HepG2 (cell line): ENCODE measurements at regions of chr15 and their contacts with region 1.

Region 1: GRCh38 chr15:70863450-70864218 is 9.7 kb upstream of the LARP6 start:
- DNase-seq: peak; percentile 82
- ATAC-seq: peak; percentile 78
- H3K4me3 ChIP-seq: no peak overlapping the region
- H3K27ac ChIP-seq: no peak overlapping the region
- H3K4me1 ChIP-seq: peaks cover 29% of the 10 kb centered on the region
- H3K27me3 ChIP-seq: no peaks in the 10 kb centered on the region; a peak in 1 of 5 replicates
- CTCF ChIP-seq: no peak
- EP300 ChIP-seq: no peak
- POLR2A ChIP-seq: no peak
- RAD21 ChIP-seq: no peak

Region 2: DNA sequence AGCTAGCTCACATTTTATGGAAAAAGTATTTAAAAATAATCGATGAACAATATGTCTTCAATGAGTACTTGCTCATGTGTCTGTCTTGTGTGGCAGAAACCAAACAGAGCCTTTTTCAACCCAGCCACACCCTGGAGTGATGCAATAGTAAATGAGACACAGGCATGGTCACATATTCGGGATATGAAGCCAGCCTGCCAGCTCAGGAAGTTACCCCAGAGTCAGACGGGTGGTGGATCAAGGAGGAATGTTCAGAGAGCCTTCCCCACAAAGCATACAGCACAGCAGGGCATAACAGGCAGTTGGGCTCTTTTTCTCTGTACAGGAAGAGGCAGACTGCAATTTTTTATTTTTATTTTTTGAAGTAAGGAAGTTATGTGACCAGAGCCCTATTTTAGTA is 37.0 kb before region 1 on chr15:
- CTCF ChIA-PET with region 1: no interaction called
- POLR2A ChIA-PET with region 1: no interaction called
- in situ Hi-C with region 1: no loop called
- intact Hi-C with region 1: loop called (anchors 1 kb)
- DNase-seq: peak; percentile 27
- ATAC-seq: no peak
- H3K4me3 ChIP-seq: no peak overlapping the region
- H3K27ac ChIP-seq: no peak overlapping the region
- H3K4me1 ChIP-seq: peaks cover 17% of the 10 kb centered on the region; the same call in 1 of the 2 replicates
- H3K27me3 ChIP-seq: no peaks in the 10 kb centered on the region
- CTCF ChIP-seq: no peak
- EP300 ChIP-seq: no peak
- POLR2A ChIP-seq: no peak
- RAD21 ChIP-seq: no peak

Region 3: GRCh38 chr15:70833897-70834765 is 29.5 kb before region 1 on chr15:
- CTCF ChIA-PET with region 1: no interaction called
- POLR2A ChIA-PET with region 1: interaction called, 11 read pairs
- in situ Hi-C with region 1: no loop called
- intact Hi-C with region 1: no loop called
- DNase-seq: peak; percentile 72
- ATAC-seq: peak; percentile 86
- H3K4me3 ChIP-seq: peak overlapping the region in 1 of 3 experiments; percentile 19; a peak in 2 of 6 replicates
- H3K27ac ChIP-seq: peak overlapping the region; percentile 46
- H3K4me1 ChIP-seq: peaks cover 38% of the 10 kb centered on the region
- H3K27me3 ChIP-seq: no peaks in the 10 kb centered on the region
- CTCF ChIP-seq: no peak
- EP300 ChIP-seq: peak in 1 of 2 experiments; percentile 54; a peak in 1 of 4 replicates
- POLR2A ChIP-seq: no peak
- RAD21 ChIP-seq: no peak

Region 4: GRCh38 chr15:70875001-70875782 is 11.6 kb after region 1 on chr15:
- CTCF ChIA-PET with region 1: no interaction called
- POLR2A ChIA-PET with region 1: interaction called, 10 read pairs
- in situ Hi-C with region 1: no loop called
- intact Hi-C with region 1: no loop called
- DNase-seq: no peak
- ATAC-seq: peak; percentile 41; the same call in 1 of the 3 replicates
- H3K4me3 ChIP-seq: no peak overlapping the region
- H3K27ac ChIP-seq: no peak overlapping the region
- H3K4me1 ChIP-seq: peaks cover 26% of the 10 kb centered on the region
- H3K27me3 ChIP-seq: no peaks in the 10 kb centered on the region
- CTCF ChIP-seq: peak; percentile 61
- EP300 ChIP-seq: no peak
- POLR2A ChIP-seq: no peak
- RAD21 ChIP-seq: no peak